ENCODE measurements at regions of chr5 and their contacts with region 1.

Region 1: GRCh38 chr5:111254613-111255012 is 30.4 kb downstream of the CAMK4 start:
- DNase-seq: peak; percentile 56
- H3K4me3 Mint-ChIP-seq: peak overlapping the region; percentile 45
- H3K27ac Mint-ChIP-seq: peak overlapping the region; percentile 79
- H3K4me1 Mint-ChIP-seq: peaks cover 80% of the 10 kb centered on the region
- H3K27me3 Mint-ChIP-seq: no peaks in the 10 kb centered on the region

Region 2: GRCh38 chr5:111187079-111187478 is 67.5 kb before region 1 on chr5:
- CTCF ChIA-PET with region 1: no interaction called
- POLR2A ChIA-PET with region 1: no interaction called
- DNase-seq: no peak
- H3K4me3 Mint-ChIP-seq: no peak overlapping the region
- H3K27ac Mint-ChIP-seq: no peak overlapping the region
- H3K4me1 Mint-ChIP-seq: no peaks in the 10 kb centered on the region
- H3K27me3 Mint-ChIP-seq: no peaks in the 10 kb centered on the region

Region 3: GRCh38 chr5:111229871-111230810 is 24.5 kb before region 1 on chr5:
- CTCF ChIA-PET with region 1: interaction called, 11 read pairs
- POLR2A ChIA-PET with region 1: interaction called, 3 read pairs
- DNase-seq: peak; percentile 40
- H3K4me3 Mint-ChIP-seq: peak overlapping the region; percentile 77
- H3K27ac Mint-ChIP-seq: peak overlapping the region; percentile 98
- H3K4me1 Mint-ChIP-seq: peaks cover 71% of the 10 kb centered on the region
- H3K27me3 Mint-ChIP-seq: no peaks in the 10 kb centered on the region

Region 4: DNA sequence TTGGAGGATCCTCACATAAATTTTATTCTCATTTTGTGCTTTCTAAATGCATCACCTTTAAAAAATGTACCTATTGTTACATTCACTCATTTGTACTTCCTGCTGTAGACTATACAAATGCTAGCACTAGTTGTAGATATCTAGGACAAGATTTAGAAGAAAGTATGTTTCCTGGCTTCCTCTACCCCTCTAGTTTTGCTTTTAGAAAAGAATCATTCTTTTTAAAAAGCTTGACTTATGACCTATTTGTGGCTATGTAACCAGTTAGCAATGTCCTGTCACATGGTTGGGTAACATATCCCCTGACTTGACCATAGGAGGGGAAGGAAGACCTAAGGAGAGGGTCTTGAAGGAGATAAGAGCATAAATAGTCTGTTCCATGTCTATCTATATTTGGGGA is 17.1 kb before region 1 on chr5:
- CTCF ChIA-PET with region 1: interaction called, 13 read pairs
- POLR2A ChIA-PET with region 1: no interaction called
- DNase-seq: no peak
- H3K4me3 Mint-ChIP-seq: peak overlapping the region; percentile 61
- H3K27ac Mint-ChIP-seq: peak overlapping the region; percentile 93
- H3K4me1 Mint-ChIP-seq: peaks cover 86% of the 10 kb centered on the region
- H3K27me3 Mint-ChIP-seq: no peaks in the 10 kb centered on the region

Region 5: GRCh38 chr5:111266491-111266890 is 11.9 kb after region 1 on chr5:
- CTCF ChIA-PET with region 1: interaction called, 12 read pairs
- POLR2A ChIA-PET with region 1: no interaction called
- DNase-seq: no peak
- H3K4me3 Mint-ChIP-seq: no peak overlapping the region
- H3K27ac Mint-ChIP-seq: no peak overlapping the region
- H3K4me1 Mint-ChIP-seq: peaks cover 43% of the 10 kb centered on the region
- H3K27me3 Mint-ChIP-seq: no peaks in the 10 kb centered on the region

Measured in activated CD4-positive, alpha-beta T cell treated with anti-CD3 and anti-CD28 coated beads, Interleukin-2, amount 10 ng/mL, durations not matched to agents 7 days and 5 days (primary cell).